Dendritic cell treated with granulocyte-macrophage colony-stimulating factor and Interleukin-4, amounts not matched to agents 40 ng/mL and 50 ng/mL, for 4 days (primary cell): ENCODE measurements at regions of chr14 and their contacts with region 1.

Region 1: GRCh38 chr14:50599700-50600444 is 39.9 kb downstream of the ATL1 start:
- H3K4me3 Mint-ChIP-seq: no peak overlapping the region
- H3K27ac Mint-ChIP-seq: no peak overlapping the region
- H3K4me1 Mint-ChIP-seq: no peaks in the 10 kb centered on the region
- H3K27me3 Mint-ChIP-seq: no peaks in the 10 kb centered on the region

Region 2: GRCh38 chr14:50631408-50631821 is 31.5 kb after region 1 on chr14:
- intact Hi-C with region 1: no loop called
- H3K4me3 Mint-ChIP-seq: no peak overlapping the region
- H3K27ac Mint-ChIP-seq: no peak overlapping the region
- H3K4me1 Mint-ChIP-seq: no peaks in the 10 kb centered on the region
- H3K27me3 Mint-ChIP-seq: no peaks in the 10 kb centered on the region

Region 3: GRCh38 chr14:50714450-50715073 is 114.7 kb after region 1 on chr14:
- intact Hi-C with region 1: loop called (anchors 2 kb)
- H3K4me3 Mint-ChIP-seq: no peak overlapping the region
- H3K27ac Mint-ChIP-seq: no peak overlapping the region
- H3K4me1 Mint-ChIP-seq: no peaks in the 10 kb centered on the region
- H3K27me3 Mint-ChIP-seq: no peaks in the 10 kb centered on the region

Region 4: DNA sequence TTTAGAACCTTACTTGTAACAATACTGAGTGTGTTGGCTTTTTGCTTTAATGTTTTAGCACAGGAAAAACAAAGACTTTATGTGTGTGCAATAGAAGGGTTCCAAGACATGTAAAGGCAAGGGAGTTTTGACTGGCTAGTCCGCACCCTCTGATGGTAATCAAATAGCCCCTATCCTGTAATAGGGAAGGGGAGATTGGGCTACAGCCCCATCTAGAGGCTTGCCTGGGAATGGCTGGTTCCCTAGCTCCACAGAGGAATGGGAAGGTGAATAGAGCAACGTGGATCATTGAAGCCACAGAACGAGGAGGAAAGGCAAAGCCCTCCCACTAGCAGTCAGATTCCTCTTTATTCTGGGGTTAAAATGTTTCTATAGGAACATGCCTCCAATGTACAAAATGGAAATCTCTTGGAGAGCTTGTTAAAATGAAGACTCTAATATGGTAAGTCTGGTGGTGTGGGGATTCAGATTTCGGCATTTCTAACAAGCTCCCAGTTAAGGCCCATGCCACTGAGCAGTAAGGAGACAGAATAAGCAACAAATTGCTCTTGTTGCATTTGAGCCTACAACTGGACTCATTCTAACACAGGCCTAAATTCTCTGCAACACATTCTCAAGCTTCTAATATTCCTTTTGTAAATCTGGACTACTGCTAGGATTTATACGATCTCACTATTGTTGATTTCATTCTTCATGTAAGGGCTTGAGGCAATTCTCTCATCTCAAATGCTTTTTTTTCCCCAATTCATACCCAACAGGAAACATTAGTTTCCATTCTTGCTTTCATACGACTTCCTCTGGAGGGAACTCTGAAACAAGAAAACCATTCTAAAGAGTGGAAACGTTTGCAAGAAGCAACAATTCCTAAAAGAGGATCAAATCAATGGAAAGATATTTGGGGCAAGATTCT is 174.0 kb after region 1 on chr14:
- intact Hi-C with region 1: loop called (anchors 5 kb)
- H3K4me3 Mint-ChIP-seq: no peak overlapping the region
- H3K27ac Mint-ChIP-seq: no peak overlapping the region
- H3K4me1 Mint-ChIP-seq: peaks cover 1% of the 10 kb centered on the region
- H3K27me3 Mint-ChIP-seq: no peaks in the 10 kb centered on the region